ENCODE measurements at regions of chr1 and their contacts with region 1.

Region 1: DNA sequence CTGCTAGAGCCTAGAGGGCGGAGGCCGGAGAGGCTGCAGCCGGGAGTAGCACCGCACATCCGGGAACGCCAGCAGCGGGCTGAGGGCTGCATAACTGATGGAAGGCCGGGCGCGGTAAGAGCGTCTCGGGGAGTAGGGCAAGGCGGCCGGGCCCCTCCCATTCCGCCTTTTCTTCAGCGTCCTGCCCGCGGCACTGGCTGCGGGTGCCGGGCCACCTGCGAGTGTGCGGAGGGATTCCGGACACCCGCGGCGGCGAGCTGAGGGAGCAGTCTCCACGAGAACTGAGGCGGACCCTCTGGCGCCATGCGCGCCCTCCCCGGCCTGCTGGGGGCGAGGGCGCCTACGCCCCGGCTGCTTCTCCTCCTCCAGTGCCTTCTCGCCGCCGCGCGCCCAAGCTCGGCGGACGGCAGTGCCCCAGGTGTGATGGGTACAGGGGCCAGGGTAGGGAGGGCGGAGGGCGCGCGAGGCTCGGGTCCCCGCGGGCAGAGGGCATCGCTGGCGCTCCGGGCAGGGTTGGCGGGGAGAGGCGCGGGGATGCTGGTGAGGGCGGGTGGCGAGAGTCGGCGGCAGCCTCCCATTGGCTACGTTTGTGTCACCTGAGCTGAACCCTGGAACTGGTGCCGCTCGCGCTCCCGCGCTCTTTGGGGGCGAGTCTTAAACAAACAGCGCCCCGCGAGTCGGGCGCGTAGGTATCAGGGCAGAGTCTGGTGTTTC is 334.4 kb downstream of the SRGAP2C start:
- DNase-seq: peak; percentile 93
- ATAC-seq: peak; percentile 91
- H3K4me3 Mint-ChIP-seq: peak overlapping the region; percentile 78
- H3K27ac Mint-ChIP-seq: peak overlapping the region; percentile 90
- H3K4me1 Mint-ChIP-seq: peaks cover 52% of the 10 kb centered on the region
- H3K27me3 Mint-ChIP-seq: peaks cover 2% of the 10 kb centered on the region

Region 2: DNA sequence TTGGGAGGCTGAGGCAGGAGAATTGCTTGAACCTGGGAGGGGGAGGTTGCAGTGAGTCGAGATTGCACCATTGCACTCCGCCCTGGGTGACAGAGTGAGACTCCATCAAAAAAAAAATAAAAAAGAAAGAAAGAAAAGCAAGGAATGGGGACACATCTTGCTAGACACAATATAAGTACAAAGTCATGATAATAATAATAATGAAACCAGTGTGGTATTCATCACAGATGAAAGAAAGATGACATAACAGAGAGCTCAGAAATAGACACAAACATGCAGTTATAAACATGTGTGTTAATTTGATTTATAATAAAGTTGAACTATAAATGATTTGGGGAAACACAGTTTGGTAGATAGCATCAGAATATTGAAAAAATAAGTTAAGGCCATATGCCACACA is 70.3 kb before region 1 on chr1:
- CTCF ChIA-PET with region 1: interaction called, 3 read pairs
- POLR2A ChIA-PET with region 1: no interaction called
- intact Hi-C with region 1: loop called in 1 of 2 experiments (anchors 2 kb)
- DNase-seq: no peak
- ATAC-seq: no peak
- H3K4me3 Mint-ChIP-seq: no peak overlapping the region
- H3K27ac Mint-ChIP-seq: no peak overlapping the region
- H3K4me1 Mint-ChIP-seq: peaks cover 8% of the 10 kb centered on the region
- H3K27me3 Mint-ChIP-seq: no peaks in the 10 kb centered on the region

Region 3: GRCh38 chr1:121458291-121459048 is 60.7 kb before region 1 on chr1:
- CTCF ChIA-PET with region 1: no interaction called
- POLR2A ChIA-PET with region 1: interaction called, 7 read pairs
- intact Hi-C with region 1: loop called (anchors 1 to 2 kb)
- DNase-seq: no peak
- ATAC-seq: peak; percentile 95
- H3K4me3 Mint-ChIP-seq: peak overlapping the region; percentile 21
- H3K27ac Mint-ChIP-seq: no peak overlapping the region
- H3K4me1 Mint-ChIP-seq: peaks cover 12% of the 10 kb centered on the region
- H3K27me3 Mint-ChIP-seq: peaks cover 9% of the 10 kb centered on the region

Region 4: GRCh38 chr1:121483961-121484424 is 35.2 kb before region 1 on chr1:
- CTCF ChIA-PET with region 1: no interaction called
- POLR2A ChIA-PET with region 1: no interaction called
- intact Hi-C with region 1: loop called in 1 of 2 experiments (anchors 2 kb)
- DNase-seq: peak; percentile 22
- ATAC-seq: peak; percentile 82
- H3K4me3 Mint-ChIP-seq: no peak overlapping the region
- H3K27ac Mint-ChIP-seq: peak overlapping the region; percentile 80
- H3K4me1 Mint-ChIP-seq: peaks cover 19% of the 10 kb centered on the region
- H3K27me3 Mint-ChIP-seq: no peaks in the 10 kb centered on the region

Region 5: DNA sequence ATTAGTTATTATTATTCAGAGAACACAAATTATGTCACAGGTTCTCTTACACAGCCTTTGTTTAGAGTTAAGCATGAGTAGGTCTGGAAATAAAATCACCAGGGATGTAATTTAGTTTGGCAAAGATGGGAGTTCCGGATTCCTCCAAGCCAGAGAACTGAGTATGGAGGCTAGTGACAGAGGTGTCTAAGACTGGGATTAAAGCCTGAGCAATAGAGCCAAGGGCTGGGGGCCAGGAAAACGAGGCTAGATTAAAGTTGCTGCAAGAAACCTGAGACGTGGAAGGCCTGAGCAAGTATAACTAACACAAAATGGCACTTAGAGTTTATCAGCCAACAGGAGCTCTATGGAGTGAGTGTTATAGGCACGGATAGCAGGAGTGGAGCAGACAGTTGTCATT is 47.1 kb after region 1 on chr1:
- CTCF ChIA-PET with region 1: no interaction called
- POLR2A ChIA-PET with region 1: no interaction called
- intact Hi-C with region 1: no loop called
- DNase-seq: no peak
- ATAC-seq: no peak
- H3K4me3 Mint-ChIP-seq: no peak overlapping the region
- H3K27ac Mint-ChIP-seq: no peak overlapping the region
- H3K4me1 Mint-ChIP-seq: peaks cover 8% of the 10 kb centered on the region
- H3K27me3 Mint-ChIP-seq: no peaks in the 10 kb centered on the region

Region 6: GRCh38 chr1:121595089-121595488 is 75.9 kb after region 1 on chr1:
- CTCF ChIA-PET with region 1: no interaction called
- POLR2A ChIA-PET with region 1: no interaction called
- intact Hi-C with region 1: no loop called
- DNase-seq: no peak
- ATAC-seq: peak; percentile 30
- H3K4me3 Mint-ChIP-seq: no peak overlapping the region
- H3K27ac Mint-ChIP-seq: no peak overlapping the region
- H3K4me1 Mint-ChIP-seq: peaks cover 8% of the 10 kb centered on the region
- H3K27me3 Mint-ChIP-seq: no peaks in the 10 kb centered on the region

Measured in activated CD4-positive, alpha-beta T cell treated with anti-CD3 and anti-CD28 coated beads for 36 hours (primary cell).